Activated B cell treated with CpG ODN at 0.5 μM for 24 hours (primary cell): ENCODE measurements at regions of chr5 and their contacts with region 1.

Region 1: GRCh38 chr5:112154940-112155686 is 264.0 kb downstream of the EPB41L4A start:
- DNase-seq: no peak
- ATAC-seq: no peak
- H3K4me3 Mint-ChIP-seq: no peak overlapping the region
- H3K27ac Mint-ChIP-seq: no peak overlapping the region
- H3K4me1 Mint-ChIP-seq: peaks cover under 1% of the 10 kb centered on the region
- H3K27me3 Mint-ChIP-seq: peaks cover 4% of the 10 kb centered on the region
- CTCF ChIP-seq: no peak

Region 2: DNA sequence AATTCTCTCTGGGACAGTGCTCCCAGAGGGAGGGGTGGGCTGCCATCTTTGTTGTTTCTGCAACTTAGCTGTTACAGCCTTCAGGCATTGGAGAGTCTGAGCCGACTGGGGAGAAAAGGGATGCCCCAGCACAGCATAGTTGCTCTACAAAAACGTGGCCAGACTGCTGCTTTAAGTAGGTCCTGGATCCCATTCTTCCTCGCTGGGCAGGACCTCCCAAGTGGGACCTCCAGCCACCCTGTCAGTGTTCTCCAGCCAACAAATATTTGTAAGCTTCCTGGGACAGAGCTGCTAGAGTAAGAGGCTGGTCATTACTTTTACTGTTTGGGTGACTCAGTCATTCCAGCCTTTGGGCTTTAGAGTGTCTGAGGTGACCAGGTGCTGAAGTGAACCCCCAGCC is 105.4 kb before region 1 on chr5:
- CTCF ChIA-PET with region 1: no interaction called
- POLR2A ChIA-PET with region 1: no interaction called
- intact Hi-C with region 1: no loop called
- DNase-seq: no peak
- ATAC-seq: no peak
- H3K4me3 Mint-ChIP-seq: no peak overlapping the region
- H3K27ac Mint-ChIP-seq: no peak overlapping the region
- H3K4me1 Mint-ChIP-seq: no peaks in the 10 kb centered on the region
- H3K27me3 Mint-ChIP-seq: no peaks in the 10 kb centered on the region
- CTCF ChIP-seq: no peak

Region 3: DNA sequence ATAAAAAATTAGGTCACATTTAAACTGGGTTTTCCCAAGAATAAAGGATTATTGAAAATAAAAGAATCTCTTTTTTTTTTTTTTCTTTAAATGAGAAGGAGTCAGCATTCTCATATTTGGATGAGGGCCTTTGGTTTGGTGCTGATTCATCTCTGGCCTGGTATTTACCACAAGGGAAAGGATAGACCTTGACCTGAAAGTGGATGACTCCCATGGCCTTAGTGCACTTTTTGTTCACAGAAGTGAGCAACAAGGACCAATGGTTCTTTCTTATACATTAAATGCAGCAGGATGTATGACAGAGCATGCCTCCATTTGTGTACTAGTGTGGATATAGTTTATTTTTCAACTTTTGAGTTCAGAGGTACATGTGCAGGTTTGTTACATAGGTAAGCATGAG is 1365.3 kb after region 1 on chr5:
- CTCF ChIA-PET with region 1: no interaction called
- POLR2A ChIA-PET with region 1: no interaction called
- intact Hi-C with region 1: loop called (anchors 5 kb)
- DNase-seq: no peak
- ATAC-seq: no peak
- H3K4me3 Mint-ChIP-seq: no peak overlapping the region
- H3K27ac Mint-ChIP-seq: no peak overlapping the region
- H3K4me1 Mint-ChIP-seq: peaks cover 52% of the 10 kb centered on the region
- H3K27me3 Mint-ChIP-seq: no peaks in the 10 kb centered on the region
- CTCF ChIP-seq: no peak